PC-9 (cell line): ENCODE measurements at regions of chr17 and their contacts with region 1.

Region 1: GRCh38 chr17:42536048-42536371 is at the start of gene NAGLU:
- DNase-seq: peak; percentile 66 to 86
- H3K4me3 ChIP-seq: peak within 1 kb of the TSS; percentile 61
- H3K27ac ChIP-seq: peak within 1 kb of the TSS; percentile 36; the same call in 1 of the 2 replicates
- H3K4me1 ChIP-seq: peaks cover 23% of the 10 kb centered on the region
- H3K27me3 ChIP-seq: no peaks in the 10 kb centered on the region
- CTCF ChIP-seq: no peak
- total RNA-seq, gene NAGLU: 18.2 and 20.6 TPM in 2 replicates

Region 2: GRCh38 chr17:41870627-41871026 is 665.4 kb before region 1 on chr17:
- CTCF ChIA-PET with region 1: interaction called, 17 read pairs
- POLR2A ChIA-PET with region 1: no interaction called
- intact Hi-C with region 1: no loop called
- DNase-seq: no peak
- H3K4me3 ChIP-seq: no peak overlapping the region
- H3K27ac ChIP-seq: no peak overlapping the region
- H3K4me1 ChIP-seq: no peaks in the 10 kb centered on the region
- H3K27me3 ChIP-seq: no peaks in the 10 kb centered on the region
- CTCF ChIP-seq: no peak

Region 3: GRCh38 chr17:42472709-42473521 is 63.1 kb before region 1 on chr17:
- CTCF ChIA-PET with region 1: no interaction called
- POLR2A ChIA-PET with region 1: no interaction called
- intact Hi-C with region 1: no loop called
- DNase-seq: no peak
- H3K4me3 ChIP-seq: no peak overlapping the region
- H3K27ac ChIP-seq: no peak overlapping the region
- H3K4me1 ChIP-seq: no peaks in the 10 kb centered on the region
- H3K27me3 ChIP-seq: no peaks in the 10 kb centered on the region
- CTCF ChIP-seq: no peak

Region 4: DNA sequence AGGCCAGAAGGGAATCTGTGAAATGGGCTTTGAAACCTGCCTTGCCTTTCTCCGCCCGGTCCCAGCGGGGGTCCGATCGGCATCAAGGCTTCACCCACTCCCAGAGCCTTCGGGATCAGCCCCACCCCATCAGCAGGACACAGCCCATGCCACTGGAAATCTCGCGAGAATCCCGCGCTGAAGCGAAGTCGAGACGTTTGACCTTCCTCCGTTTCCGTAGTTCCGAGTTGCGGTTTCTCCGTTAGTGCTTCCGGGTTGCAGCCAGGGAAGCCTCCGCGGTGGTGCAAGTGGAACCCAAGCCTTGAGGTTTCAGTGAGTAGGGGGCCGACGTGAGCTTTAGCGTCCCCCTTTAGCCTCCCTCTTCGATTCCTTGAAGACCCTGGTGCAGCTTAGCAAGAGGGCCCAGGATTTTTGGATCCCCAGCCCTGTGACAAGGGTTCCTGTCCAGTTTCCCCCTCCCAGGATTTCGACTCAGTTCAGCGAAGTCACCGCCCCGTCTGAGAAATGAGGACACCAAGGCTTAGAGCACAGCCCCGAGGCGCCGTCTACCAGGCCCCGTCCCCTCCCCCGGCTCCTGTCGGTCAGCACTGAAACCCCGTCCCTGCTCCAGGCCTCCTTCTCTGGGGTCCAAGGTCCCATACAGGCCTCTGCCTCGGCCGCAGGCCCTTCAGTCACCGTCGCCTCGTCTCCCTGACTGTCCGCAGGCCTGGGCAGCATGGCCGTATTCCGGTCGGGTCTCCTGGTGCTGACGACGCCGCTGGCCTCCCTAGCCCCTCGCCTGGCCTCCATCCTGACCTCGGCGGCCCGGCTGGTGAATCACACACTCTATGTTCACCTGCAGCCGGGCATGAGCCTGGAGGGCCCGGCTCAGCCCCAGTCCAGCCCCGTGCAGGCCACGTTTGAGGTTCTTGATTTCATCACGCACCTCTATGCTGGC is 26.2 kb after region 1 on chr17 and contains the start of gene COASY:
- CTCF ChIA-PET with region 1: no interaction called
- POLR2A ChIA-PET with region 1: no interaction called
- intact Hi-C with region 1: loop called (anchors 2 kb)
- DNase-seq: peak; percentile 88 to 90
- H3K4me3 ChIP-seq: peak within 1 kb of the TSS; percentile 81
- H3K27ac ChIP-seq: peak within 1 kb of the TSS; percentile 81
- H3K4me1 ChIP-seq: peaks cover 28% of the 10 kb centered on the region
- H3K27me3 ChIP-seq: no peaks in the 10 kb centered on the region
- CTCF ChIP-seq: no peak
- total RNA-seq, gene COASY: 133 and 152 TPM in 2 replicates

Region 5: GRCh38 chr17:42632949-42633444 is 97.0 kb after region 1 on chr17:
- CTCF ChIA-PET with region 1: no interaction called
- POLR2A ChIA-PET with region 1: no interaction called
- intact Hi-C with region 1: no loop called
- DNase-seq: no peak
- H3K4me3 ChIP-seq: no peak overlapping the region
- H3K27ac ChIP-seq: no peak overlapping the region
- H3K4me1 ChIP-seq: no peaks in the 10 kb centered on the region
- H3K27me3 ChIP-seq: no peaks in the 10 kb centered on the region
- CTCF ChIP-seq: no peak

Region 6: GRCh38 chr17:42797067-42798007 is 261.3 kb after region 1 on chr17:
- CTCF ChIA-PET with region 1: no interaction called
- POLR2A ChIA-PET with region 1: no interaction called
- intact Hi-C with region 1: no loop called
- DNase-seq: no peak
- H3K4me3 ChIP-seq: peak overlapping the region; percentile 88
- H3K27ac ChIP-seq: no peak overlapping the region
- H3K4me1 ChIP-seq: peaks cover 12% of the 10 kb centered on the region
- H3K27me3 ChIP-seq: no peaks in the 10 kb centered on the region
- CTCF ChIP-seq: no peak

Region 7: GRCh38 chr17:42819944-42820535 is 284.0 kb after region 1 on chr17:
- CTCF ChIA-PET with region 1: no interaction called
- POLR2A ChIA-PET with region 1: interaction called, 11 read pairs
- intact Hi-C with region 1: no loop called
- DNase-seq: peak; percentile 40 to 58
- H3K4me3 ChIP-seq: no peak overlapping the region
- H3K27ac ChIP-seq: no peak overlapping the region
- H3K4me1 ChIP-seq: peaks cover 10% of the 10 kb centered on the region
- H3K27me3 ChIP-seq: no peaks in the 10 kb centered on the region
- CTCF ChIP-seq: peak; percentile 83

Region 8: DNA sequence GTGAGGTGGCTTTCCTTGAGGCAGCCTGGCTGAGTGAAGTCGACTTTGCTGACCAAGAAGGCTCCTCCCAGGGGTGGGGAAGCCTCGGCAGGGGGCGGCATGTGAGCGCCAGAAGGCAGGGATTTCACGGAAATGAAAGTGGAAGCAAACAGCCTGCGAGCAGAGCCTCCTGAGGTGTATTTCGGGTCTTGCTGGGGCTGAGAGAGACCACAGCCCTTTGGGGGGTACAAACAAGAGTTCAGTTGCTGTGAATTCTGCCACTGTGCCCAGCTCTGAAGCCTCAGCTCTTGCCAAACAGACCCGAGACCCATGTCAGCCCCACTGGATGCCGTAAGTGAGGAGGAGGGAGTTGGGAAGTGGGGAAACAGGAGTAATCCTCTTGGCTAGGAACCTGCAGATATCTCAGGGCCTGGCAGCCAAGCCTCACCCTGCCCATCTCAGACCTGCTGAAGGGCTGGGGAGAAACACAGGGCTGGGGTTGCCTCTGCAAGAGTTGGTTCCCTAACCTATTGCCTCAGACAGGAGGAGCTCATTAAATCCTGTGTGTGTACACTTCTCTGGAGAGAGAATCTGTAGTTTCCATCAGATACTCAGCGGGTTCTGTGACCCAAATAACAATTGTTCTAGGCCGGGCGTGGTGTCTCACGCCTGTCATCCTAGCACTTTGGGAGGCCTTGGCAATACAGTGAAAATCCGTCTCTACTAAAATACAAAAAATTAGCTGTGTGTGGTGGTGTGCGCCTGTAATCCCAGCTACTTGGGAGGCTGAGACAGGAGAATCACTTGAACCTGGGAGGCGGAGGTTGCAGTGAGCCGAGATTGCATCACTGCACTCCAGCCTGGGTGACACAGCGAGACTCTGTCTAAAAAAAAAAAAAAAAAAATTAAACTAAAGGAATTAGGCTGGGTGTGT is 470.9 kb after region 1 on chr17 and contains the start of gene IFI35:
- CTCF ChIA-PET with region 1: interaction called, 10 read pairs
- POLR2A ChIA-PET with region 1: no interaction called
- intact Hi-C with region 1: no loop called
- DNase-seq: peak; percentile 73 to 81
- H3K4me3 ChIP-seq: peak within 1 kb of the TSS; percentile 75
- H3K27ac ChIP-seq: peak within 1 kb of the TSS; percentile 77
- H3K4me1 ChIP-seq: peaks cover 39% of the 10 kb centered on the region
- H3K27me3 ChIP-seq: no peaks in the 10 kb centered on the region
- CTCF ChIP-seq: peak; percentile 48; the same call in 1 of the 2 replicates
- total RNA-seq, gene IFI35: 19.7 and 22.1 TPM in 2 replicates